Naive thymus-derived CD8-positive, alpha-beta T cell (primary cell): ENCODE measurements at regions of chr2 and their contacts with region 1.

Region 1: DNA sequence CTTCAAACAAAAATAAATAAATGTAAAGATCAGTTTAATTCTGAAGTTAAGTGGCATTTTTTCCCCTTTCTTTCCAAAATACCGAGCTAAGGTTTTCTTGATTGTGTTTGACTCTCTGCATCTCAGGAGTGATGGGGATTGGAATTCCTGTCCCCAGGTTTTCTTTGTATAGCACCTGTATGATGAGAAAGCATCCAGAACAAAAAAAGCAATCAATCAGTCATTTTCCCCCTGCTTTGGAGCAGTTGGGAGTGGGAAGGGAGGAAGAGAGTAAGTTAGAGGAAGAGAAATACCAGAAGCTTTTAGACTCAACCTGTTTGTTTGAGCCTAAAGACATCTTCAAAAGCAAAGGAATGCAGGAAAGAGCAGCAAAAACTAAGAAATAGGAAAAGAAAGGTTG is 88.5 kb downstream of the RIF1 start:
- DNase-seq: no peak
- ATAC-seq: no peak
- H3K4me3 Mint-ChIP-seq: no peak overlapping the region
- H3K27ac Mint-ChIP-seq: no peak overlapping the region
- H3K4me1 Mint-ChIP-seq: no peaks in the 10 kb centered on the region
- H3K27me3 Mint-ChIP-seq: no peaks in the 10 kb centered on the region

Region 2: DNA sequence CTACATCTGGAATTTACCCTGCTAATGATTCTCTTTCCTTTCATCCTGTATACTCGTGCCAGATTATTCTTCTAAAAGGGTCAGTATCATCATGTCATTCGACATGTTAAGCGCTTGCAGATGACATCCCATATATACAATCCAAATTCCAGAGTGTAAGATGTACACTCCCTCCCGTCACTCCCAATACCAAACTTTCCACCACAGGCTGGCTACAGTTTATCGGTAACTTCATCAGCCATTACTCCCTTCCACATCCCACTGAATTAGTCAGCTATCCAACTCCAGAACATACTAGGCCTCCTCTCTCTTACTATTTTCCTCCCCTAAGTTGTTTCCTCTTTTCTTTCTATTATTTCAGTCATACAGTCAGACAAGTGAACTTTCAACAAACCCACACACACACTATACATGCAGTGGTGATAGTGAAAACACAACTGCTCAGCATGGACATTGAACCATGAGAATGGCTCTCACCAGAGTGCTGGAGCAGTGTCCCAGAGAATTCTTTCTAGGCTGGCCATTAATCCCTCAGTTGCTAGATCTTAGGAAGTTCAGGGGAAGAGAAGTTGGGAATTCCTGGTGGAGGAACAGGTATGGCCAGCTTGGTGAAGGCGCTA is 198.1 kb before region 1 on chr2:
- POLR2A ChIA-PET with region 1: interaction called, 10 read pairs
- DNase-seq: no peak
- ATAC-seq: no peak
- H3K4me3 Mint-ChIP-seq: no peak overlapping the region
- H3K27ac Mint-ChIP-seq: no peak overlapping the region
- H3K4me1 Mint-ChIP-seq: peaks cover 0 to 4% (median 0%) of the 10 kb centered on the region in 4 donors
- H3K27me3 Mint-ChIP-seq: peaks cover 0 to 9% (median 2%) of the 10 kb centered on the region in 5 donors

Region 3: DNA sequence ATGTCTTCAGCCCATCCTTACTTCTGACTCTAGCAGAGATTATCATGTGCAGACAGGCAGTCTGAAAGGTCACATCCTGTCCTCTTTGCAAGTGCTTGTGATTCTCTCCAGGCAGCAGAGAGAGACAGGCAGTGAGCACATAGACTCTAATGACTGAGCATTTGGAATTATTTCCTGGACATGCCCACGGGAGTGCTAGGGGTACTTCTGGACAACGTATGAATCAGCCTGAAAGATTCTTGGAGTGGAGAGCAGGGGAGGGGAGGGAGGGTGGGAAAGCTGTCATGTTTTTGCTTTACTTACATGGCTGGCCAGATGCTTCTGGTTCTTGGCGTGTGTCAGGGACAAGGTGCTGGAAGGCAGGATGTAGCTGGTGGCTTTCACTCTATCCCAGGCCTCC is 62.1 kb after region 1 on chr2:
- POLR2A ChIA-PET with region 1: no interaction called
- DNase-seq: no peak
- ATAC-seq: no peak
- H3K4me3 Mint-ChIP-seq: no peak overlapping the region
- H3K27ac Mint-ChIP-seq: no peak overlapping the region
- H3K4me1 Mint-ChIP-seq: peaks cover 0 to 5% (median 0%) of the 10 kb centered on the region in 4 donors
- H3K27me3 Mint-ChIP-seq: no peaks in the 10 kb centered on the region